ENCODE measurements at regions of chr3 and their contacts with region 1.

Region 1: DNA sequence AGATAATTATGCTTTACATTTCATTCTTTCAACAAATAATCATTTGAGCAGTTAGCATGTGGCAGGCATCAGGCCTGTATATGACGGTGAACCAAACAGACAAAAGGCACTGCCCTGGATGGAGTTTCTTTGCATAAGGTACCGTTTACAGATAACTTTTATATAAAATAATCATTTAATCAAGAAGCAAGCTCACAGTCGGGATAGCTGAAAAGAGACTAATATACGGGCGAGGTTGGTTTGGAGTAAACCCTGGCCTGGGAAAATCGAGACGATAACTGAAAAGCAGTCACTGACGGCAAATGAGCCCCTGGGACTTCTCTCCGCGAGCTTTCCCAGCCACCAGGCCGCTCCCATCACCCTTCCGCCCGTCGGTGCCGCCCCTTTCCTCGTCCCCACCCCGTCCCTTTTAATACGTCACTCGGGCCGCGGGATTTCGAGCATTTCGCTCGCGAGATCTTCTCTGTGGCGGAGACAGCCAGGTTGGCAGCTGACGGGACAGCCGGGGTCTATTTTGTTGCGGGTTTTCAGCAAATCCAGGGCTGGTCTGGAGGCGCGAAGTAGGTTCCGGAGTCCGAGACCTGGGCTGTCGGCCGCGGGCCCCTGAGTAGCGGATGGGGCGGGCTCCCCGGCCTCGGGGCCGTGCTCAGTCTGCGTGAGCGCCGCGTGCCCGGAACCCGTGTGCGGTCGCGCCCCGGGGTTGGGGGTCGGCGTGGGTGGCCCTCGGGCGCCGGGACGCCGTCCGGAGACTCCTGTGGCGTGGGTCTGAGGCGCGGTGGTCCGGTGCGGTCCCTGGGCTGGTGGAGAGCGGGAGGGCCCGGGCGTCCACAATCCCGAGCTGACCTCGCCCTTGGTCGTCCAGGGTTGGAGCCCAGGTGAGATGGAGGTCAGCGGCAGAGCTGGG is at the start of gene NMD3:
- DNase-seq: peak; percentile 99
- H3K4me3 Mint-ChIP-seq: peak within 1 kb of the TSS; percentile 89
- H3K27ac Mint-ChIP-seq: peak within 1 kb of the TSS; percentile 95
- H3K4me1 Mint-ChIP-seq: peaks cover 21% of the 10 kb centered on the region
- H3K27me3 Mint-ChIP-seq: no peaks in the 10 kb centered on the region
- CTCF ChIP-seq: no peak
- total RNA-seq, gene NMD3: 90.7 and 104 TPM in 2 replicates

Region 2: DNA sequence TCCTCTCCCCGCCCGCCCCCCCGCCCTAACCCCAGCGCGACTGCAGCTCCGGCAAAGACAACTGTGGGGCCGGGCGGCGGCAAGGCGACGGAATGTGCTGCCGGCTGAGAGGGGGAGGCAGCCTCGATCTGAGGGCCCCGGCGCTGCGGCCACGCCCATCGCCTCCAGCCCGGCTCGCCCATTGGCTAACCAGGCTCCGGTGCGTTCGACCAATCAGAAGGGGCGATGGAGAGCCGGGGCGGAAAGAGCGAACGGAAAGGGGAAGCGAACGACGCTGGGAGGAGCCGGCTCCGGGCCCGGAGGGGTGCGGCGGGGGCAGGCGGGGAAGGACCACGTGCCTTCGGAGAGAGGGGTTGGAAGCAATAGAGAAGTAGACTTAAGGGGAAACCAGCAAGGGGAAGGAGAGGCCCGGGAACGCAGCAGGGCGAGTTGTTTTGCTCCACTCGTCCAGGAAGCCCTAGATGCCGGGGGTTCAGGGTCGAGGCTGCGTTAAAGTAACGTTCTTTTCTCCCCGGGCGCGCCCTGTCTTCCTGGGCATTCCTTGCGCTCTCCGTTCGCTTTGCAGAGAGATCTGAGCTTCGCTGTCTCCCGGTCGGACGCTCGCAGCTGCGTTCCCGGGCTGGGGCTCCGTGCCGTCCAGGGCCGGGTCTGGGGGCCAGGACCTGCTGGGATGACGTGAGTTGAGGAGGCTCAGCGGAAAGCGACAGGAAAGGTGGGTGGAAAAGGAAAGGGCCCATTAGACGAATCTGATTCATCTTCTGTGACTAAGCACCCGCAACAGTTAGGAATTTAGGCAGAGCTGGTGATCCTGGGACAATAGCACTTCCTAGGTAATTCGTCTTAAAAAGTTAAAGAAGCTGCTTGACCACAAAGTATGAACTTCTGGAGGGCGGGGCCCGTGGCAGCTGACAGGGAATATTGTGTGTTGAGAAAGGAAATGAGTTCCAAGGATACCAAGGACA is 655.4 kb before region 1 on chr3 and contains the start of gene KPNA4:
- CTCF ChIA-PET with region 1: no interaction called
- intact Hi-C with region 1: loop called (anchors 10 kb)
- DNase-seq: peak; percentile 100
- H3K4me3 Mint-ChIP-seq: peak within 1 kb of the TSS; percentile 94
- H3K27ac Mint-ChIP-seq: peak within 1 kb of the TSS; percentile 97
- H3K4me1 Mint-ChIP-seq: peaks cover 53% of the 10 kb centered on the region
- H3K27me3 Mint-ChIP-seq: no peaks in the 10 kb centered on the region
- CTCF ChIP-seq: no peak
- total RNA-seq, gene KPNA4: 116 and 117 TPM in 2 replicates

Region 3: DNA sequence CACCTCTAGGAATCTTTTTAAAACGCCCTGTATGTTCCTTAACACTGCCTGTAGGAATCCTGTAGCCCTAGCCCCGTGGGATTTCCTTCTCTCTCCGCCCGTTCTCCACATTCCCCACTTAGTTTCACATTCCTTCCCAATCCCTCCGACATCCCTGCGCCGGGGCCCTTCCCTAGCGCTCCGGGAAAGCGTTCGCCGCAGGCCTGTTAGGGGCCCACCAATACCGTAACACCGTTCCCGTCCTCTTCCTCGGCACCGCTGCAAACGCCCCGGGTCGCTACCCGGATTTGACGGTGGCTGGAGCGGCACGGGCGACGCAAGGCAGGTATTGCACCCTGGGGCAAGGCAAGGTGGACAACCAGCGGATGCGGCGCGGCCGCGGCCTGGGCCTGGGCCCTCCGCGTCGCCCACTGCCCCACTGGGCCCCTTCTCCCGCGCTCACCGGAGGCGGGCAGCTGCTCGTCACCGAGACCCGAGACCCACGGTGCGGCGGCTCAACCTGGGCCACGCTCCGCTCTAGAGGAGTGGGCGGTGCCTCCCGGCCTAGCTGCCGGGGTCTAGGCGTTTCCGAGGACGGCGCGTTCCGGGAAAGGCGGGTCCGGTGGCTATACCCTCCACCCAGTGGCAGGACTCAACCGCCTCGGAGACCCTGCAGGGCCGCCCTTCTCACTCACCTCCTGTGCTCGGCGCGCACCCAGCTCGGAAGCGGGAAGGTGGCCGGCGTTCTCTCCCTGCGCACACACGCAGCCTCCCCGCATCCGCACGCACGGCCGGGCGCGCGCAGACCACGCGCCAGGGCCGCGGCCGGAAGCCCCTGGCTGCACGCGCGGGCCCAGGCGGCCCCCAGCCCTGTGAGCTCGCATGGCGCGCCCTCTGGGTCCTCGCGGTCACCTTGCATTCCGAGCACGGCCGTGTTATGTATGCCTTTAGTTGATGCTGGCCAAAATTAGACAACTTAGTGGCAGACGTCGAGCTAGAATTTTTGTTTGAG is 116.2 kb before region 1 on chr3 and contains the start of gene B3GALNT1:
- CTCF ChIA-PET with region 1: interaction called, 5 read pairs
- intact Hi-C with region 1: loop called (anchors 2 kb)
- DNase-seq: peak; percentile 81
- H3K4me3 Mint-ChIP-seq: peak within 1 kb of the TSS; percentile 85
- H3K27ac Mint-ChIP-seq: peak within 1 kb of the TSS; percentile 50
- H3K4me1 Mint-ChIP-seq: peaks cover 26% of the 10 kb centered on the region
- H3K27me3 Mint-ChIP-seq: no peaks in the 10 kb centered on the region
- CTCF ChIP-seq: no peak
- total RNA-seq, gene B3GALNT1: 25.1 and 31.1 TPM in 2 replicates

Region 4: GRCh38 chr3:161239703-161240102 is 18.6 kb after region 1 on chr3:
- CTCF ChIA-PET with region 1: interaction called, 4 read pairs
- intact Hi-C with region 1: loop called (anchors 2 kb)
- DNase-seq: no peak
- H3K4me3 Mint-ChIP-seq: no peak overlapping the region
- H3K27ac Mint-ChIP-seq: no peak overlapping the region
- H3K4me1 Mint-ChIP-seq: no peaks in the 10 kb centered on the region
- H3K27me3 Mint-ChIP-seq: no peaks in the 10 kb centered on the region
- CTCF ChIP-seq: no peak

Measured in Calu3 (cell line).